ENCODE measurements at regions of chr22 and their contacts with region 1.

Region 1: DNA sequence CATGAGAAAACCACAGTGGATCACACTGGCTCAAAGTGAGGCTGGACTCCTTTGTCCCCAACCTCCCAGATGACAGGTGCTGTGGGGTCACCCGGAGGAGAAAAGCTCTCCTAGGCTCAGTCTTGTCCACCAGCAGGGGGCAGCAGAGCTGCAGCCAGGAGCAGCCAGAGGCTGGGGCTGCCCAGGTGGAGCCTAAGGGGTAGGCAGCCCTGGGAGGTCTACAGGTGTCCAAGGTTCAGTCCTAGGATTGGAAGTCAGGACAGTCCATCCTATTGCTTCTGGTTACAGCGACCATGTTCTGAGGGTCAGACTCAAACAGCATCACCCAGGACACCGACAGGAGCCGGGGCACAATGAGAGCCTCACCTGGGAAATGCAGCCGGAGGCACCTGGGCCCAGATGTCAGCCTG is 77.6 kb upstream of the IGLL5 start:
- DNase-seq: peak; percentile 80
- H3K4me3 Mint-ChIP-seq: no peak overlapping the region
- H3K27ac Mint-ChIP-seq: no peak overlapping the region
- H3K4me1 Mint-ChIP-seq: peaks cover 12% of the 10 kb centered on the region
- H3K27me3 Mint-ChIP-seq: no peaks in the 10 kb centered on the region

Region 2: GRCh38 chr22:22877523-22878210 is 67.6 kb after region 1 on chr22:
- CTCF ChIA-PET with region 1: interaction called, 120 read pairs
- intact Hi-C with region 1: loop called (anchors 1 kb)
- DNase-seq: peak; percentile 85
- H3K4me3 Mint-ChIP-seq: no peak overlapping the region
- H3K27ac Mint-ChIP-seq: no peak overlapping the region
- H3K4me1 Mint-ChIP-seq: no peaks in the 10 kb centered on the region
- H3K27me3 Mint-ChIP-seq: no peaks in the 10 kb centered on the region

Measured in activated naive CD4-positive, alpha-beta T cell treated with anti-CD3 and anti-CD28 coated beads for 36 hours (primary cell).